ENCODE measurements at regions of chr11 and their contacts with region 1.

Region 1: DNA sequence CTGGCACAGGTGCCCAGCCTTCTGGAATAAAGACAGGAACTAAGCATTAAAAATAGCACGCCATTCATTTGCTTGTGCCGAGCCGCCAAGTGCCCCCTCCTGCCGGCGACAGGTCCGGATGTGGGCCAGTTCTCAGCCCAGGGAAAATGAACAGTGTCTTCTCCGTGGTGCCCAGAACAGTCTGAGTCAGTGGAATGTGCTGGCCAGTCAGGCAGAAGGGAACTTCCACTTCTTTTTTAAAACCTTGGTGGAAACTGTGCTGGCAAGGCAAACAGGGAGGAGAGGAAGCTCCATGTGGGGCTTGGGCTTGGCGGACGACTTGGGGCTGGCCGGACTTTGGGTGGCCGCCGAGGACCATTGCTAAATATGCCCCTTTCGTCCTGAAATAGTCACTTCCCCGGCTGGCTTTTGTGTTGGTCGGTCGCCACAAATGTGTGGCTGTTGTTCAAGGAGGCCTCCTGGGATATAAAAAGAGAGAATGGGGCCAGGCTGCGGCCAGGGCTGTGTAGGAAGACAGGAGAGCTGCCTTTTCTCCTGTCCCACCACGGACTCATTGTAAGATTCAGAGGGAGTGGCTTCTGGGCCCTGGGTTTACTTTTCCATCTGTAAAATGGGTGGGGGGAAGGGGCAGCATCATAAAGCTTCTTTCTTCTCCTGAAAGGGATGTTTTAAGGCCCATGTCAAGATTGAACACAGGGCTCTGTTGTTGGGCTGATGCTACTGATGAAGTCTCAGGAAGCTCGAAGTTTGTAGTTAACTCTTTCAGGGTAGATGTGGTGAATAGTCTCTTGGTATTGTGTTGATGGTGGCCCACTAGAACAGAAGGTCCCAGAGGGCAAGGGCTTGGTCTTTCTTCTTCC is 101.0 kb downstream of the PTPRJ start:
- DNase-seq: peak; percentile 74 to 95
- H3K4me3 ChIP-seq: no peak overlapping the region
- H3K27ac ChIP-seq: peak overlapping the region; percentile 64 to 78
- H3K4me1 ChIP-seq: peaks cover 0 to 15% of the 10 kb centered on the region in 2 donors
- H3K27me3 ChIP-seq: no peaks in the 10 kb centered on the region
- CTCF ChIP-seq: no peak

Region 2: DNA sequence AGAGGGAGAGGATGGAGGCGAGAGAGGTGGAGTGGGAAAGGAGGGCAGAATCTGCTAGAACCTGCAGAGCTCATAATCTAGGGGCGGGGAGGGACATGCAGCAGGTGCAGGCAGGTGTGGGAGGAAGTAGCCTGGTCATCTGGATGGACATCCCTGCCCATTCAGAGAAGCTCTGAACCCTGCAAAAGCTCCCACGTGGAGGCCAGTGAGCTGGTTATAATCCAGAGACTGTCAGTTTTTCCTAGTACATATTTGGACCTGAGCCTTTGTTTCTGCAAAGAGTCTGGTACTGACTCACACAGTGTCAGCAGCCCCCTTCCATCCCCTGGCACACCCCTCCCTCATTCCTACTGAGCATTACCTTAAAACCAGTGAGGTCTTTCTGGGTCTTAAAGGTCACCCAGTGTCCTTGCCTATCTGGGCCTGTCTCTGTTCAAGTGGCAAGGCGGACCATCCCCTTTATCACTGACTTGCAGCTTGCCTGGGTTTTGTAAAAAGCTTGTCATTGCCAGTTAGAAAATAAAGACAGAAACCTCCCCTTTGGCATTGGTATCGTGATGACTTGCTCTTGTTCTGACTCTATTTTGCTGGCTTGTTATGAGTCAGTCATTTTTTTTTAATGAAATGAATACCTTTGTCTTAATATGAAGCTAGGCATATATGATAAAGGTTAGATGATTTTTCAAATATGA is 74.9 kb before region 1 on chr11:
- intact Hi-C with region 1: loop called (anchors 5 kb)
- DNase-seq: peak in 1 of 2 donors; percentile 73
- H3K4me3 ChIP-seq: peak overlapping the region in 1 of 2 donors; percentile 1
- H3K27ac ChIP-seq: peak overlapping the region; percentile 58 to 80
- H3K4me1 ChIP-seq: peaks cover 3 to 31% of the 10 kb centered on the region in 2 donors
- H3K27me3 ChIP-seq: no peaks in the 10 kb centered on the region
- CTCF ChIP-seq: no peak

Region 3: GRCh38 chr11:48063424-48063978 is 17.9 kb before region 1 on chr11:
- intact Hi-C with region 1: loop called (anchors 2 kb)
- DNase-seq: peak in 1 of 2 donors; percentile 69
- H3K4me3 ChIP-seq: no peak overlapping the region
- H3K27ac ChIP-seq: peak overlapping the region; percentile 67 to 71
- H3K4me1 ChIP-seq: peaks cover 10 to 20% of the 10 kb centered on the region in 2 donors
- H3K27me3 ChIP-seq: no peaks in the 10 kb centered on the region
- CTCF ChIP-seq: no peak